Breast epithelium (tissue), 4 donors: ENCODE measurements at regions of chr11 and their contacts with region 1.

Region 1: DNA sequence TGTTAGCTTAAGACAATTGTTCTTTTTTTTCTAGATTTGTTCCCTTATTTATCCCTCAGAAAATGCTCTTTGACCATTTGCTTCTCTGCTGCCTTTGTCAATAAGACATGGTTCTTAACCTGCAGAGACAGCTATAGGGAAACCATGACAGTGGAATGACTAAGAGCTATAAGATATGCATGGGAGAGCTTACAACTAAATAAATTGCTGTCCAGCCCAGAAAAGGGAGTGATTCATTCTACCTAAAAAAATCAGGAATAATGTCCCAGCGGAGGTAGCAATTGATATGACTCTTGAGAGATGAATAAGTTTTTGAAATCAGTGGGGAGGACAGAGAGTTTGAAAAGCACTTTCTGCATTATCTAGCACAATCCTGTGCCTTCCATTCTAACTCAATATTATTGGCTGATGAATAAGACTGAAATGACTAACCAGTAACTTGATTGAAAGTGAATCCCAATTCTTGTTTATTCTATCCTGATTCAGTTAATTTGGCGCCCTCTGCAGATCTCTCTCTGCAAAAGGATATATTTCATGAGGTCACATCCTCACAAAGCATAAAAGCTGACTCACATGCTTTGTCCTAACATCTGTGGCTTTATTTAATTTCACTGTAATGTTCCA is 680.5 kb upstream of the API5 start:
- DNase-seq: no peak
- H3K4me3 ChIP-seq: no peak overlapping the region
- H3K27ac ChIP-seq: no peak overlapping the region
- H3K4me1 ChIP-seq: no peaks in the 10 kb centered on the region
- H3K27me3 ChIP-seq: no peaks in the 10 kb centered on the region
- CTCF ChIP-seq: no peak
- POLR2A ChIP-seq: no peak

Region 2: DNA sequence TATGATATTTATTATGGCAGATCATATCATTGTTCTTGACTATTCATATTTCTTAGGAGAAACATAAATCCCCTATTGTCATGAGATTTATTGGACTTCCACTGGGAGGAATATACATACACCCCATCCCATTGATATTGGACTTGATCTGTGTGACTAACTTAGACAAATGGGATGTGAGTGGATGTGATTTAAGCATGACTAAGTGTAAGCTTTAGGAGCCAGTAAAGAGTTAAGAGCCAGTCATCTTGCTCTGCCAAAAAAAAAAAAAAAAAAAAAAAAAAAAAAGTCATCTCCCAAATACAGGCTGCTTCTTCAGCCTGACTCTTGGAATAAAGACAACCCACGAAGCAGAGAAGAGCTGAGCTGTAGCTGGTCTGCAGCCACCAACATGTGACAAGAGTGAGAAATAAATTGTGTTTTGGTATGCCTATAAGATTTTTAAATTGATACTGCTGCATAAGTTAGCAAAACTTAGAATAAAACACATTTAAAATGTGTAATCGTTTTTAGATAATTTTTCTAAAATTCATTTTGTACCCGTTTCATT is 576.9 kb before region 1 on chr11:
- intact Hi-C with region 1: no loop called
- DNase-seq: no peak
- H3K4me3 ChIP-seq: no peak overlapping the region
- H3K27ac ChIP-seq: no peak overlapping the region
- H3K4me1 ChIP-seq: no peaks in the 10 kb centered on the region
- H3K27me3 ChIP-seq: no peaks in the 10 kb centered on the region
- CTCF ChIP-seq: no peak
- POLR2A ChIP-seq: no peak

Region 3: GRCh38 chr11:42555190-42555589 is 76.1 kb before region 1 on chr11:
- intact Hi-C with region 1: loop called (anchors 2 kb)
- DNase-seq: no peak
- H3K4me3 ChIP-seq: no peak overlapping the region
- H3K27ac ChIP-seq: no peak overlapping the region
- H3K4me1 ChIP-seq: no peaks in the 10 kb centered on the region
- H3K27me3 ChIP-seq: no peaks in the 10 kb centered on the region
- CTCF ChIP-seq: no peak
- POLR2A ChIP-seq: no peak

Region 4: DNA sequence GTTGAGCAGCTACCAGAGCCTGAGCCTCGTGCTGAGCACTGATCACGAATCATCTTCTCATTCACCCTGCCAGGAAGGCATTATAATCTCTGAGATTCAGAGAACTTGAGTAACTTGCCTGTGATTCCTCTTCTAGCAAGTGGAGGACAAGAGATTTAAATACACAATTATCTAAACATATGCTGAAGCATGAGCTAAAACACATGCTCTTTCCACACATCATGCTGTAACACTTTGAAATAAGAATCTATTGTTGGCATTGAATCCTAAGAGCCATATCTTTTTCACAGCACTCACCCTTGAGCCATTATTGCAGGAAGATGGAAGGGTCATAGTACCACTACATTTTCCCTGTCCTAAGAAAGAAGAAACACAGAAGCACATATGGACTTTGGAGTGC is 42.0 kb before region 1 on chr11:
- intact Hi-C with region 1: no loop called
- DNase-seq: no peak
- H3K4me3 ChIP-seq: no peak overlapping the region
- H3K27ac ChIP-seq: no peak overlapping the region
- H3K4me1 ChIP-seq: no peaks in the 10 kb centered on the region
- H3K27me3 ChIP-seq: no peaks in the 10 kb centered on the region
- CTCF ChIP-seq: no peak
- POLR2A ChIP-seq: no peak

Region 5: GRCh38 chr11:42657169-42657568 is 25.8 kb after region 1 on chr11:
- intact Hi-C with region 1: no loop called
- DNase-seq: no peak
- H3K4me3 ChIP-seq: no peak overlapping the region
- H3K27ac ChIP-seq: no peak overlapping the region
- H3K4me1 ChIP-seq: no peaks in the 10 kb centered on the region
- H3K27me3 ChIP-seq: no peaks in the 10 kb centered on the region
- CTCF ChIP-seq: no peak
- POLR2A ChIP-seq: no peak